H1 (cell line): ENCODE measurements at regions of chr10 and their contacts with region 1.

Region 1: DNA sequence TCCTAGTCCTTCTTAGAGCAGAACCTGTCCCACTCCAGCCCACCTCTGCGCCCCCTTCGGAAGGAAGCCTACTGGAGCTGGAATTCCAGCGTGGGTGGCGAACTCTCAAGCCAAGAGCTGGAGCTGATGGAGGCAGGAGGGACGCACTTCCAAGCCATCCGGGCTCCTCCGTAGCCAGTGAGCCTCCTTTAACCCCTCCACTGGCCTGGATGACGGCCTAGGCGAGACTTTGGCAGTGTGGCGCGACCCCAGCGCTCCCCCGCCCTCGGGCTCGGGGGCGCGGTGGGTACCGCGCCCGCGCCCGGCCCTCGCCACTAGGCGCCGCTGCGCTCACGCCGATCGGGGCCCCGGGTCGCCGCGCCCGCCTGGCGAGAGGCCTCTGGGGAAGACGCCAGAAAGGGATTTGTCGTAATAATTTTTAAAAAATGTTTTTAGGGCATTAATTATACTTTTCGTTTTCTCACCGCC is 5.1 kb upstream of the EMX2 start:
- DNase-seq: no peak
- H3K4me3 ChIP-seq: peak overlapping the region in 2 of 4 experiments; percentile 14 to 50; a peak in 2 of 8 replicates
- H3K27ac ChIP-seq: no peak overlapping the region
- H3K4me1 ChIP-seq: peaks cover 0 to 38% (median 17%) of the 10 kb centered on the region in 4 experiments; a peak in 6 of 7 replicates
- H3K27me3 ChIP-seq: peaks cover 96 to 100% (median 98%) of the 10 kb centered on the region in 4 experiments
- CTCF ChIP-seq: peak; percentile 58 to 81 (median 69)
- EP300 ChIP-seq: no peak
- POLR2A ChIP-seq: no peak
- RAD21 ChIP-seq: peak; percentile 63 to 89

Region 2: GRCh38 chr10:117198088-117198487 is 339.4 kb before region 1 on chr10:
- CTCF ChIA-PET with region 1: no interaction called
- POLR2A ChIA-PET with region 1: no interaction called
- DNase-seq: no peak
- H3K4me3 ChIP-seq: no peak overlapping the region
- H3K27ac ChIP-seq: no peak overlapping the region
- H3K4me1 ChIP-seq: no peaks in the 10 kb centered on the region; a peak in 2 of 7 replicates
- H3K27me3 ChIP-seq: no peaks in the 10 kb centered on the region
- CTCF ChIP-seq: no peak
- EP300 ChIP-seq: no peak
- POLR2A ChIP-seq: no peak
- RAD21 ChIP-seq: no peak

Region 3: DNA sequence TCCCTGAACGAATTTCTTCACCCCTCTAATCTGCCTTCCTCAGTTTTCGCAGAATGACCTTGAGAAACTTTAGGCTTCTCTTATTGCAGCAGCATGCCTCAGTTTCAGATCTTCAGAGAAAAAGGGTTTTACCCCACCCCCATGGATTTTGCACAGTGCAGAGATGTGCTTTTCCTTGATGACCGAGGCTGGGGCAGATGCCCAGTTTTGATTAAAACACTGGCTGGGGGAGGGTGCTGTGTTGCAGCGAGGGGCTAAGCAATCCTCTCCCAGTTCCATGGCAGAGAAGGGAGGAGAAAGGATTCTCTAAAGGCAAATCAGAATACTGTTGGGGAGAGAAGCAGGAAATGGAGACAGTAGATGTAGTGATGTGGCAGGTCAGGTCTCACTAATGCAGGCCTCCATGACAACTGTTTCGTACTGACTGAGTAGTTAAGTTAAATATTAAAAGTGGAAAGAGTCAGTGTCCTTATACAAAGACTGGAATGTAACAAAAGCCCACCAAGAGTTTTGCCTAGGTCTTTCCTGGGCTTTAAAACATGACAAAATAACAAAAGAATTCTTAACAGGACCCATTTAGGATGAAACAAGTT is 111.4 kb before region 1 on chr10:
- CTCF ChIA-PET with region 1: no interaction called
- POLR2A ChIA-PET with region 1: no interaction called
- DNase-seq: no peak
- H3K4me3 ChIP-seq: no peak overlapping the region
- H3K27ac ChIP-seq: no peak overlapping the region
- H3K4me1 ChIP-seq: peaks cover 5 to 13% (median 7%) of the 10 kb centered on the region in 4 experiments; a peak in 6 of 7 replicates
- H3K27me3 ChIP-seq: no peaks in the 10 kb centered on the region
- CTCF ChIP-seq: no peak
- EP300 ChIP-seq: no peak
- POLR2A ChIP-seq: no peak
- RAD21 ChIP-seq: no peak

Region 4: DNA sequence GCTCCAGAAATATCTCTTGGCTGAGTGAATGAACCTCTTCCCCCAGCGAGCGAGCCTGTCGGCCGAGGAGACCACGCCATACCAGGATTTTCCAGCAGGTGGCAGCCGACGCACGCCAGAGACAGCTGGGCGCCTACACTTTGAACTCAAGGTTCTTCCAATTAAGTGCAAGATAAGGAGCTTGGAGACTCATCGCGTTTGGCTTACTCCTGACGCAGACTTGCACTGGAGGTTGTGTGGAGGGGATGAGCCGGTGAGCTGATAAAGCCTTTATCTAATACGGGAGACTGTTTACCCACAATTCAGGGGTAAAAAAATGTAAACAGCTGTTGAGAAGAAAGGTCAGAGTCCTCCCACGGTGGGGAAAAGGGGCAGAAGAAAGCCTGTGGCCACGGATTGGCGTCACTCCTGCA is 40.8 kb before region 1 on chr10:
- CTCF ChIA-PET with region 1: interaction called, 84 read pairs
- POLR2A ChIA-PET with region 1: interaction called, 3 read pairs
- DNase-seq: peak; percentile 63 to 93
- H3K4me3 ChIP-seq: no peak overlapping the region
- H3K27ac ChIP-seq: no peak overlapping the region
- H3K4me1 ChIP-seq: peaks cover 0 to 3% (median 1%) of the 10 kb centered on the region in 4 experiments; a peak in 2 of 7 replicates
- H3K27me3 ChIP-seq: peaks cover 0 to 6% (median under 1%) of the 10 kb centered on the region in 4 experiments; a peak in 2 of 7 replicates
- CTCF ChIP-seq: peak; percentile 90 to 95 (median 92)
- EP300 ChIP-seq: peak in 1 of 2 experiments; percentile 41; a peak in 1 of 3 replicates
- POLR2A ChIP-seq: no peak
- RAD21 ChIP-seq: peak; percentile 99

Region 5: GRCh38 chr10:117519879-117520278 is 17.6 kb before region 1 on chr10:
- CTCF ChIA-PET with region 1: interaction called, 10 read pairs
- POLR2A ChIA-PET with region 1: no interaction called
- DNase-seq: no peak
- H3K4me3 ChIP-seq: no peak overlapping the region
- H3K27ac ChIP-seq: no peak overlapping the region
- H3K4me1 ChIP-seq: peaks cover 0 to 3% (median 0%) of the 10 kb centered on the region in 4 experiments; a peak in 2 of 7 replicates
- H3K27me3 ChIP-seq: no peaks in the 10 kb centered on the region; a peak in 3 of 7 replicates
- CTCF ChIP-seq: no peak
- EP300 ChIP-seq: no peak
- POLR2A ChIP-seq: no peak
- RAD21 ChIP-seq: no peak

Region 6: DNA sequence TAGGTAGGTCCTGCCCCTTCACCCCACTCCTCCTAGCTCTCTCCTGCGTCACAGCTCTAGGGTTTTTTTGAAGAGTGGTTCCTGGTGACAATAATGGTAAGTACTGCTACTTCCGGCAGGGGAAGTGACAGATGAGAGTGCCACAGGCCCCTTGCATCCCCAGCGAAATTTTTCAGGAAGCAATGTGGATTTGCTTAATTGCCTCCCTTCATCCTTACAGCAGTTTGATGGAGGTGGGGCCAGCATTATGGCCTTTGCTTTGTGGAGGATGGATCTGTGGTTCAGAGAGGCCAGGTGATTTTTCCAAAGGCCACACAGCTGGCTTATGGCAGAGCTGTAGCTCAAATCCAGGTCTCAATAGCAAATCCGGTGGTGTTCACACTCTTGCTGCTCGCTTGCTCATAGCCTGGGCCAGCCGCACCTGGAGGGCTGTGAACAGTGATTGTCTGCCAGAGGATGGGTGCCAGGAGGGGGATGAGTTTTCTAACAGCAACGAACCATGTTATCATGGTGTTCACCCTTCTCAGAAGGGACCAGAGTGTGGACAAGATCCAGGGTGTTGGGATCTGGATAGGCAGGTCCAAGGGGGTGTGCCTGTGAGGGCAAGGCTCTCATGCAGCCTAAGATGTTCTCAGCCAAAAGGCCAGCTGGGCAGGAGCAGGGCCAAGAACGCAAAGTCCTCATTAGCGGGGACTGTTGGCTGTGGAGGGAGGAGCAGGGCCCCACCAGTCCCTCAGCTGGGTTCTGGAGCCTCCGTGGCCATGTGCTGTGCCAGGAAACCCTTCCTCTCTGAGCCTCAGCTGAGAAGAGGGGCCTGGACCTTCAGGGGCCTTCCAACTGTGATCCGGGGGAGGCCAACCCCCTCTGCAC is 94.0 kb after region 1 on chr10:
- CTCF ChIA-PET with region 1: no interaction called
- POLR2A ChIA-PET with region 1: no interaction called
- DNase-seq: peak in 1 of 2 experiments; percentile 26
- H3K4me3 ChIP-seq: no peak overlapping the region
- H3K27ac ChIP-seq: no peak overlapping the region
- H3K4me1 ChIP-seq: no peaks in the 10 kb centered on the region
- H3K27me3 ChIP-seq: no peaks in the 10 kb centered on the region
- CTCF ChIP-seq: no peak
- EP300 ChIP-seq: no peak
- POLR2A ChIP-seq: no peak
- RAD21 ChIP-seq: no peak

Region 7: DNA sequence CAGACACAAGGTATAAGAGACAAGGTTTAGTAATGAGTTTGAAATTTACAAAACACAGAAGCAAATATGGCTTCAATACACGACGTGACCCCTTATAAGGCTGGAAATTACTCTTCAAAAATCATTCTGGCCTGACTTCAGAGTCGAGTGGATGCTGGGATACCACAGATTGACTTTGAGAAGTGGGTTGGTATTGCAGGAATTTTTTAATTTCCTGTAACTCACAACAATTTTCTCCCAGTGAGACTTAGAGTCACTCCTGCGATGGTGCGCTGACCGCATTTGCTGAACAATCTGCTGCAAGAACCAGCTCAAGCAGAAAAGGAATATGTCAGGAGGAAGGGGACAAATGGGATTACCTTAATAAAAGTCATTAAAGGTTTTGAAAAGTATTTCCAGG is 137.2 kb after region 1 on chr10:
- CTCF ChIA-PET with region 1: interaction called, 10 read pairs
- POLR2A ChIA-PET with region 1: no interaction called
- DNase-seq: no peak
- H3K4me3 ChIP-seq: no peak overlapping the region
- H3K27ac ChIP-seq: no peak overlapping the region
- H3K4me1 ChIP-seq: 0 out of 7 replicates have a peak, but pooled peaks cover 0 to 3% (median 0%) of the 10 kb centered on the region in 4 experiments
- H3K27me3 ChIP-seq: no peaks in the 10 kb centered on the region
- CTCF ChIP-seq: no peak
- EP300 ChIP-seq: no peak
- POLR2A ChIP-seq: no peak
- RAD21 ChIP-seq: no peak

Region 8: DNA sequence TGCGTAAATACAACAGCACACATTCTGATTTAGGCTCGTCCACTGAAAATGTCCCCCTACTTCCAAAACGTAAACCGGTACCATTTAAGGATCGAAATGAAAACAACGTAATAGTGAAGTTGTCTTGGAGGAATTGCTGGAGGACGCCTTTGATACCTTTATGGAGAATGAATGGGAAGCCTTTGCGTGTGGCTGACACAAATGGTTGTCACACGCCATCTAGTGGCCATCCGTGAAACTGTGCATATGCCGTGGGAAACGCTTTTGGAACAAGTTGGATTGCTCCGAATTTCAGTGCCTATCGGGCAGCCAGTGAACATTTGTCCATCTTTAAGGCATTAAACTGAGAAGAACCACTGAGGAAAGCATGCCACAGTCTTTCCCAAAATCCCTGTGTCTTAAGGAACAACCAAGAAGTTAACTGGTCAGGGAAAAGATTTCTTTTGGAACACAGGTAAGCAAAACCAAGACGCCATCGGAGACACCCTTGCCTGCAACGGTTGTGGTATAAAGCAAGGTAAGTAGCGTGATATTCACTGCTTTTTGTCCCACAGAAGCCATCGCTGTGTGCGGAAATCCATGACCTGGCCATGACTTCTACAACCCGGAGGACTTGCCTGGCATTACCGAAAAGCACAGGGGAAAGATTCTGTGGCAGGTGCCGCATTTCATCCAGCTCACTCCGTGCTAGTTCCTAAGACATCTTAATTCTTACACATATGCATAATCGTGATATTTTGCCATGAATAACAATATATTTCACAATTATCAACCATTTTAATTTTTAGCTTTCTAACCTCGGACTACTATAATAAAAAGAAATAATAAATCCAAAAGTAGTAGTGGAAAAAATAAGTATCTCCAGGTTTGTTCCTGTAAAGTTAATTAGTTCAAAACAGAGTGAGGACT is 704.0 kb after region 1 on chr10:
- CTCF ChIA-PET with region 1: interaction called, 32 read pairs
- POLR2A ChIA-PET with region 1: no interaction called
- DNase-seq: peak; percentile 60 to 89
- H3K4me3 ChIP-seq: no peak overlapping the region
- H3K27ac ChIP-seq: no peak overlapping the region
- H3K4me1 ChIP-seq: peaks cover 0 to 10% (median 7%) of the 10 kb centered on the region in 4 experiments; a peak in 3 of 7 replicates
- H3K27me3 ChIP-seq: peaks cover 10 to 36% (median 24%) of the 10 kb centered on the region in 4 experiments; a peak in 6 of 7 replicates
- CTCF ChIP-seq: peak; percentile 81 to 98 (median 87)
- EP300 ChIP-seq: no peak
- POLR2A ChIP-seq: no peak
- RAD21 ChIP-seq: peak; percentile 96